Heart left ventricle (tissue), 16 donors: ENCODE measurements at regions of chr12 and their contacts with region 1.

Region 1: DNA sequence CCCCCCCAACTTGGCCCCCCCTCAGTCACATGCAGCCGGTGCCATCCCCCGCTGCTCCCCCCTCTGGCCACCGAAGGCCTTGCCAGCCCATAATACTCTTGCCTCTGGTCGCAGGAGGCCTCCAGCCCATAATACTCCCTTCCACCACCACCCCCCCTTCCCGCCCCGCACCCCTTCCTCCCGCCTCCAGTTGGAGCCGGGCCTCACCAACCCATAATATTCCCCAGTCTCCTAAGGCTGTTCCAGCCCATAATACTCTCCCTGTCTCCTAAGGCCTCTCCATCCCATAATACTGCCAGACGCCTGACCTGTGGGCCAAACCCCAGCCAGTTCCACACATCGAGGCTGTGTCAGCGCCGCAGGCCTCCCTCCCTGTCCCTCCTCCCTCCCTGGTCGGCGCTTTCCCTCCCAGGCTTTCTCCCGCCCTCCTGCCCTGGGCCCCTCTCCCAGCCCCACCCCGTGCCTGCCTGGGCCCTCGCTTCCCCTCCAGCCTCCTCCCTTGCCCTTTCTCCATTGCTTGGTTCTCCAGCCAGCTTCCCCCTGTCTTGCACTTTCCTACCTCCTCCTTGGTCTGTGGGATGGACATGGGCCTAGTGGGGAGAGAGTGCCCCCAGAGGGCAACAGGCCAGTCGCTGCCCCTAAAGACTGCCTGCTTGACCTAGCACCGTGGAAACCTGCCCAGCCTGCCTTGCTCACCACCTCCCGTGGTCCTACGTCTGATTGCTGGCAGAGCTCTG is 6.8 kb upstream of the CHD4 start:
- DNase-seq: peak; percentile 92 to 94 (median 93)
- ATAC-seq: peak; percentile 85 to 91 (median 88)
- H3K4me3 ChIP-seq: peak overlapping the region in 4 of 12 donors; percentile 3 to 47 (median 16)
- H3K27ac ChIP-seq: peak overlapping the region; percentile 72 to 98 (median 90)
- H3K4me1 ChIP-seq: peaks cover 0 to 42% (median 27%) of the 10 kb centered on the region in 12 donors
- H3K27me3 ChIP-seq: no peaks in the 10 kb centered on the region
- CTCF ChIP-seq: peak in 1 of 12 donors; percentile 10
- POLR2A ChIP-seq: no peak

Region 2: DNA sequence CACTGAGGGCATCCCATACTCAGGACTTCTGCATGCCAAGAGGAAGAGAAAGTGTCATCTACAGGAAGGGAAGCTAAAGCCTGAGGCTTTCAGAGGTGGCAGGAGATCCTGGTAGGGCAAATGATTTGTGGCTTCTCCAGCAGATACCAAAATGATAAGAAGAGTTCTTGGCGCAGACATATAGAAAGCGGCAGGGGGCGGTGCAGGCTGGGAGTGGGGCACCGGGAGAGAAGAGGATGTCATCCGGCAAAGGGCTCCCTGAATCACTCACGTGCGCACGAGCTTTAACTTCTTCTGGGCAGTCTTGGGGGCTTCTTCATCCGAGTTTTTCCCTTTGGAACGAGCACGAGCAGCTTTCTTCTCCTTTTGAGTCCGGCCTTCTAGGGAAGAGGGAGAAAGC is 38.4 kb after region 1 on chr12:
- intact Hi-C with region 1: loop called in 2 of 10 experiments (anchors 5 kb)
- DNase-seq: no peak
- ATAC-seq: no peak
- H3K4me3 ChIP-seq: no peak overlapping the region
- H3K27ac ChIP-seq: peak overlapping the region in 1 of 12 donors; percentile 67
- H3K4me1 ChIP-seq: peaks cover 0 to 22% (median 5%) of the 10 kb centered on the region in 12 donors
- H3K27me3 ChIP-seq: no peaks in the 10 kb centered on the region
- CTCF ChIP-seq: no peak
- POLR2A ChIP-seq: no peak

Region 3: GRCh38 chr12:6688999-6689882 is 75.3 kb after region 1 on chr12 and contains the start of gene ZNF384:
- intact Hi-C with region 1: loop called in 4 of 10 experiments (anchors 2 to 5 kb)
- DNase-seq: peak; percentile 97 to 99 (median 98)
- ATAC-seq: peak; percentile 92 to 97 (median 94)
- H3K4me3 ChIP-seq: peak within 1 kb of the TSS; percentile 67 to 100 (median 88)
- H3K27ac ChIP-seq: peak within 1 kb of the TSS; percentile 88 to 100 (median 99)
- H3K4me1 ChIP-seq: peaks cover 0 to 50% (median 33%) of the 10 kb centered on the region in 12 donors
- H3K27me3 ChIP-seq: no peaks in the 10 kb centered on the region
- CTCF ChIP-seq: peak in 5 of 12 donors; percentile 8 to 37 (median 21)
- POLR2A ChIP-seq: peak in 1 of 2 donors; percentile 58
- total RNA-seq, gene ZNF384: 19.4 to 38.1 (median 25.2) TPM

Region 4: DNA sequence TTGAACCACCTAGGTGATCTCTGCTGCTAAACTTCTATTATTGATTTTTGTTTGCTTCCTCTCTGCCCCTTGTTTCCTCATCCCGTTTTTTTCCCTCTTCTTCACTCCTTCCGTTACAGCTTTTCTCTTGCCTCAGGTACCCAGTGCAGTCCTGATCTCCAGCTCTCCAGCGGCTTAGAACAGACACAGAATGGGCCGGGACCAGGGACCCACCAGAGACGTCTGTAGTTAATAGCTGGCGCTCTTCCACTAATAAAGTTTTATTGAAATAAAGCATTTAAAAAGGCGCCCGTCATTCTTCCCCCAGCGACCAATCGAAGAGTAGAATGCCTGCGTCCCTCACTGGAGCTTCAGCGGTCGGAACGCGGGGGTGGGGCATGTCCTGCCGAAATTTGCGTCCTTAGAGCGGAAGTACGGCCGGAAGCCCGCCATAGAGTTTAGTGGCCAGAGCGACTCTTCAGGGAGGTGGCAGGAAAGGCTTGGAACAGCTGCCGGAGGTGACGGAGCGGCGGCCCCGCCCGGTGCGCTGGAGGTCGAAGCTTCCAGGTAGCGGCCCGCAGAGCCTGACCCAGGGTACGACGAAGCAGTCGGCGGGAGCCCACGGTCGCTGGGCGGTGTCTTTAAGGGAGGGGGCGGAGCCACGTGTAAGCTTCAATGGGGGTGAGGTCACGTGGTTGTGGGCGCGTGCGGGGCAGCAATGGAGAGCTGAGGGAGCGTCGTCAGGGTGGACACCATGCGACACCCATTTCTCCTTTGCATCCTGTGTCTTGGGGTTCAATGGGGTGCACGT is 109.9 kb after region 1 on chr12 and contains the start of gene COPS7A:
- intact Hi-C with region 1: no loop called
- DNase-seq: peak; percentile 98 to 99 (median 99)
- ATAC-seq: peak; percentile 98 to 99 (median 99)
- H3K4me3 ChIP-seq: peak within 1 kb of the TSS; percentile 37 to 84 (median 66)
- H3K27ac ChIP-seq: peak within 1 kb of the TSS; percentile 68 to 95 (median 90)
- H3K4me1 ChIP-seq: peaks cover 0 to 23% (median 11%) of the 10 kb centered on the region in 12 donors
- H3K27me3 ChIP-seq: no peaks in the 10 kb centered on the region
- CTCF ChIP-seq: peak in 3 of 12 donors; percentile 8 to 18 (median 9)
- POLR2A ChIP-seq: peak in 1 of 2 donors; percentile 58
- total RNA-seq, gene COPS7A: 56.7 to 96.4 (median 82.6) TPM

Region 5: GRCh38 chr12:6764011-6764828 is 150.3 kb after region 1 on chr12:
- intact Hi-C with region 1: loop called in 1 of 10 experiments (anchors 5 kb)
- DNase-seq: peak; percentile 94 to 97 (median 95)
- ATAC-seq: peak; percentile 86 to 91 (median 88)
- H3K4me3 ChIP-seq: peak overlapping the region in 11 of 12 donors; percentile 7 to 100 (median 41)
- H3K27ac ChIP-seq: peak overlapping the region; percentile 80 to 99 (median 94)
- H3K4me1 ChIP-seq: peaks cover 4 to 53% (median 39%) of the 10 kb centered on the region in 12 donors
- H3K27me3 ChIP-seq: peaks cover 0 to 4% (median 0%) of the 10 kb centered on the region in 9 donors
- CTCF ChIP-seq: no peak
- POLR2A ChIP-seq: peak in 1 of 2 donors; percentile 42

Region 6: DNA sequence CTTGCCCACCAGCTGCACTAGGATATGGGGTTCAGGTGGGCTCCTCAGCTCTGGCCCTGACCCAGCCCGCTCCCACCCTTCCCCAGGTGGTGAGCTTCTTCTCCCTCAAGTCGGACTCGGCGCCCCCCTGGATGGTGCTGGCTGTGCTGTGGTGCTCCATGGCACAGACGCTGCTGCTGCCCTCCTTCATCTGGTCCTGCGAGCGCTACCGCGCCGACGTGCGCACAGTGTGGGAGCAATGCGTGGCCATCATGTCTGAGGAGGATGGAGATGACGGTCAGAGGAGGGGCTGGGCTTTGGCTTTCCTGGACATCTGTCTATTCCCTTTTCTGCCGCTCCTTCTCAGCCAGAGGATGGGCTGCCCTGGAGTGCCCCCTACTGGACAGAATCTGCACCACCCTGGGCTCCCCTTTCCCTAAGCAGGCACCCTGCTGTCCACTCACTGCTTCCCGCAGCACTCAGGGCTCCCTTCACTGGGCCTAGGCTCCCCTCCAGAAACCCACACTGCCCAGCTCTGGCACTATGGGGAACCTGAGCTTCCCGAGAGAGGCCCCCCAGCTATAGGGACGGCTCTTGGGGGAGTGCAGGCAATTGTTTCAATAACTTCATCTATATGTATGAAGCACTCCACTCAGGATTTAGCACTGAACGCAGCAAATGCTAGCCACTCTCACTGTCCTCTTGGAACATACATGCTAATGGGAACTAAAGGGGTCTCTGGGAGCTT is 211.6 kb after region 1 on chr12:
- intact Hi-C with region 1: loop called in 5 of 10 experiments (anchors 5 to 10 kb)
- DNase-seq: peak; percentile 83 to 92 (median 86)
- ATAC-seq: peak; percentile 58 to 69 (median 60)
- H3K4me3 ChIP-seq: peak overlapping the region in 5 of 12 donors; percentile 5 to 36 (median 24)
- H3K27ac ChIP-seq: no peak overlapping the region
- H3K4me1 ChIP-seq: peaks cover 0 to 55% (median 27%) of the 10 kb centered on the region in 12 donors
- H3K27me3 ChIP-seq: peaks cover 0 to 21% (median 0%) of the 10 kb centered on the region in 9 donors
- CTCF ChIP-seq: peak; percentile 82 to 95 (median 91)
- POLR2A ChIP-seq: no peak